ENCODE measurements at regions of chr10 and their contacts with region 1.

Region 1: DNA sequence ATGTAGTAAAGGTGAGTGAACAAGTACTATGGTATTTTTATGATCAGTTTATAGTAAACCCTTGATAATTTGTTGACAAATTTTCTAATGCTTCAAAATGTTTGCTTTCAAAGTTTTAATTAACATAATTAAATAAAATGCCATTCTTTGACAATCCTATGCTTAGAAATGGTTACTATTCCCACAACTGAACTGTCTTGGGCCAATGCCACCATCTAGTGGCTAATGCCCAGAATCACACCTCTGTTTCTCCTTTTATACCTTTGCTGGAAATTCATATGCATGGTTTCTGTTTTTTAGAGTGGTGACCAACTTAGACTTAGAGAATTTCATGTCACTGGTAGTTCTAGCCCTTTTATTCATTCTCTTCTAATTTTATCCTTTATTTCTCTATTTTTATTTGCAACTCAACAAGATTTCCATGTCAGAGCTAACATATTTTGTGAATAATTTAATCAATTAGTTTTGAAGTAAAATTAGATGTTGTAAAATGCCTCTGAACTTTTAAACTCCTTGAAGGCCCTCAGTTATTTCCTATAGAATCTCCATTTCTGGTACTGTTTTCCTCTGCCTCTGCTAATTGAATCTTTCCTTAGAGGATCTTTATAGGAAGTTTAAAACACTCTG is 31.1 kb downstream of the PCGF5 start:
- DNase-seq: no peak
- ATAC-seq: peak; percentile 67

Region 2: GRCh38 chr10:90885176-90885575 is 366.4 kb before region 1 on chr10:
- intact Hi-C with region 1: loop called (anchors 2 kb)
- DNase-seq: no peak
- ATAC-seq: no peak

Region 3: DNA sequence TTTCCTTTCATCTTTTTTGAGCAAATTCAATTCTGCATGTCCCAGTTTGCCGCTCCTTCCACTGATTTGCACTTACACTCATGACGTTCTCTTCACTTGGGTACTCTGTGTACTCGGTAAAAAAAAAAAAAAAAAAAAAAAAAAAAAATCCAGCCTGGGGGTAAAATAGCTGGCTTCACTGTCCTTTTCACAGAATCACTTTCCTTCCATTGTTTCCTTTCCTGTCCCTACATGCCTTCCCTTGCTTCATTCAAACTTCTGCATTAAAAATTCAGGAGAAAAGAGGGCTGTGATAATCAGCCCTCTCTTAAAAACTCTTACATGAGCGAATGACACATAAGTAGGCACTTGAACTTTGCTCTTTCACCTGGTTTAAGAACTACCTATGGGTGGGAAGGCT is 339.4 kb before region 1 on chr10:
- intact Hi-C with region 1: loop called (anchors 2 kb)
- DNase-seq: no peak
- ATAC-seq: no peak

Region 4: GRCh38 chr10:91006752-91007346 is 244.7 kb before region 1 on chr10:
- intact Hi-C with region 1: loop called (anchors 1 kb)
- DNase-seq: no peak
- ATAC-seq: no peak

Region 5: DNA sequence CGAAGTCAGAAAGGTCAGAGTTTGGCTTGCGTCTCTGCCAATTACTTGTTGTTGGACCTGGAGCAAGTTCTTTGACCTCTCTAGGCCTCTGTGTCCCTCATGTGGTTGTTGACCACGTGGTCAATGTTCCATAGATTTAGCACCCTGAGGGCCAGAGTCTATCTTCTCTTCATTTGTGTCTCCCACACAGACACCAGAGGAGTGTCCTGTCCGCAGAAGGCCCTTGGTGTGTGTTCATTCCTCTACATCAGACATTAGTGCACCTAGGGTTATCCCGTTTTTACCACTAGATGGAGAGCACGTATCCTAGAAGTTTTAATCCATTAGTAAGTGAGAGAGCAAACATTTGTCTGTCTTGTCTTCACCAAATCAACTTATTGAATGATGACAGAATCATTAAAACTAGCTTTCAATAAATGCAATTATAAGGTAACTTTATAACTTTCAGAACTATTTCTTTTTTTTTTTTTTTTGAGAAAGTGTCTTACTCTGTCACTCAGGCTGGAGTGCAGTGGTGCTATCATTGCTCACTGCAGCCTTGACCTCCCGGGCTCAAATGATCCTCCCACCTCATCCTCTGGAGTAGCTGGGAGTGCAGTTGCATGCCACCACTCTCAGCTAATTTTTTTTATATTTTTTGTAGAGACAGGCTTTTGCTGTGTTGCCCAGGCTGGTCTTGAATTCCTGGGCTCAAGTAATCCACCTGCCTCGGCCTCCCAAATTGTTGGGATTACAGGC is 208.2 kb before region 1 on chr10:
- intact Hi-C with region 1: loop called (anchors 1 kb)
- DNase-seq: no peak
- ATAC-seq: peak; percentile 88

Region 6: DNA sequence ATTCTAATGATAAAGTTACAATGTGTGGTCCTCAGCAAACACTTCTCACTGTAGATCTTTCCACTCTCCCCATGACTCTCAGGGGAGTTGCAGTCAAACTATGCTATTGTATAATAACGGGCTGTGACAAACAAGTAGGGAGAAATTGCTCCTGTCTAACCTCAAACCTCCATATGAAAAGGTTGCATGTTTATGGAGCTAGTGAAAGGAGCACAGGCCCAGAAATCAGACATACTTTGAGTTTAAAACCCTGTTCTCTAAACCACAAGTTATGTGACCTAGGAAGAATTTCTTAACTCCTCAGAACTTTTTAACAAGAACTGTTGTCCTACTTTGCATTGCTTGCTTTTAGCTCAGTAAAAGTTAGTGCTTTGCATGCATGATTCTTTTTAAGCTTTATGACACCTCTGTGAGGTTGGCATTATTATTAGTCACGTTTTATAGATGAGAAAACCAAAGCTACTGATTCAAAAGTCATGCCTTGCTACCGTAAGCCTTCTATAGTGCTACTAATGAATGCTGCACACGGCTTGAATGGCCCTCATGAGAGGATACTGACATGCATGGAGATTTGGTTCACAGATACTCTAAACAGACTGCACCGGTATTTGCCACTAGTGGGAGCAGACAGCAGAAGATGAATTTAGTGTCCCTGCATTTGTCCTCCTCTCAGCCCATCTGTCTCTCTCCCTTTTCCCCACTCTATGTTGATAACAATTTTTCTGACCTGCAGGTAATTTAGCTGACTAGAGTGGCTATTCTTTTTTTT is 160.6 kb before region 1 on chr10:
- intact Hi-C with region 1: loop called (anchors 2 kb)
- DNase-seq: no peak
- ATAC-seq: peak; percentile 35

Region 7: GRCh38 chr10:91163269-91163868 is 88.2 kb before region 1 on chr10:
- intact Hi-C with region 1: loop called (anchors 5 kb)
- DNase-seq: peak; percentile 87
- ATAC-seq: peak; percentile 51

Region 8: GRCh38 chr10:91287276-91287675 is 35.7 kb after region 1 on chr10:
- intact Hi-C with region 1: no loop called
- DNase-seq: no peak
- ATAC-seq: no peak